ENCODE measurements at regions of chr21 and their contacts with region 1.

Region 1: GRCh38 chr21:45140346-45140940 is 66.1 kb downstream of the ADARB1 start:
- DNase-seq: peak; percentile 86

Region 2: GRCh38 chr21:44773287-44773966 is 367.0 kb before region 1 on chr21:
- in situ Hi-C with region 1: loop called (anchors 10 kb)
- DNase-seq: no peak

Region 3: DNA sequence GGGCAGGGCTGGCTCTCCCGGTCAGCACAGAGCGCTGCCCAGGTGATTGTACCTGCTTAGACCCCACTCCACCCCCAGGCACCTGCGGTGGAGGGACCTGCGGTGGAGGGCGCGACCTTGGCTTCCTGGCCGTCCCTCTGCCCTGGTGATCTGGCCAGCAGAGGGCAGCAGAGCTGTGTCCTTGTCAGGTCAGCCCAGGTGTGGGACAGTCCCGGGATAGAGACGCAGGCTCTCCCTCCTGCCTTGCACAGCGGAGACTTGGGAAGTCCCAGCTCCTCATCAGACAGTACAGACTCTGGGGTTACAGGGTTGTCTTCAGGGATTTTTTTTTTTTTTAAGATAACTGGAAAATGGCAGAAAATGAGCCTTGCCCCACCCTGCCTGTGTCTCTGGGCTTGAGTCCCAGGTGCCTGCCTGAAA is 190.7 kb before region 1 on chr21:
- in situ Hi-C with region 1: loop called (anchors 10 kb)
- DNase-seq: peak; percentile 46

Region 4: GRCh38 chr21:45439161-45439872 is 298.9 kb after region 1 on chr21:
- in situ Hi-C with region 1: loop called (anchors 25 kb)
- DNase-seq: peak; percentile 89